ENCODE measurements at regions of chr3 and their contacts with region 1.

Region 1: GRCh38 chr3:111717601-111718000 is 122.5 kb upstream of the ZBED2 start:
- DNase-seq: no peak
- H3K4me3 ChIP-seq: no peak overlapping the region
- H3K27me3 ChIP-seq: no peaks in the 10 kb centered on the region
- CTCF ChIP-seq: peak; percentile 87

Region 2: GRCh38 chr3:111691293-111691909 is 26.2 kb before region 1 on chr3:
- CTCF ChIA-PET with region 1: interaction called, 29 read pairs
- POLR2A ChIA-PET with region 1: no interaction called
- DNase-seq: no peak
- H3K4me3 ChIP-seq: no peak overlapping the region
- H3K27me3 ChIP-seq: no peaks in the 10 kb centered on the region
- CTCF ChIP-seq: peak; percentile 64

Region 3: DNA sequence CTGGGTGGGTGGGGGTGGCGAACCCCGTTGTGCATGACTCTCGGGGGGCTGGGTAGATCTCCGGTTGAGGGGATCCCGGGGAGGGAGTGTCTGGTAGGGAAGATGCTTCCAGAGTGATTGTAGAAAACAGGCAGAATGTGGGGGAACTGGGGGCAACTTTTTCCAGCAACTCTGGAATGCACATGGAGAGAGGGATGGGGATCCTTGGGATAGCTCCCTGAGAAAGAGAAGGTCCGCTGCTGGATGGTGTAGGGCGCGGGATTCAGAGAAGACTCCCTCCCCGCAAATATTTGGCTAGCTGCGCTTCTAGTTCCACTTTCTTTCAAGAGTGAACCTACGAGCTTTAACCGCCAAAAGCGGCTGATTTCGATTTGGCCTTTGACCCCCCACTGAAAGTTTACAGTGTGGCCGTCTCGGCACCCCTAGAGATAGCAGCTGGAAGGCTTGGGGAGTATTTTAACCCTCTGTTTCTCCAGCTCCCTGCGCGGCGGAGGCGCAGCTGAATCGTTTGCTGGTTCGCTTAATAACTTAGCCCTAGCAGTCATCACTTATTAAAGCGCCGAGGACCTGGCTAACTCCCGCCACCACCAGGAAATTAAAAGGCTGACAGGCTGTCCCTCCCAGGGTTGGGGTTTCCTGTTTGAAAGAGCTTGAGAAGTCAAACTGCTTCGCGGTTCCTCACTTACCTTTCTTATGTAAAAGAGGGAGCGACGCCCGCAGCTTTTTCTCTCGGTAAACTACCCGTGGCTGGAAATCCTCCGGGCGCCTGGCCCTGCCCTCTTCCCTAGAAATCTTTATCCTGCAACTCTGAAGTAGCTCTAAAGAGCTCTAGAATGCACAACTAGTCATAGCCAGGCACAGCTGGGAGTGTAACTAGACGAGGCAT is 142.6 kb after region 1 on chr3:
- CTCF ChIA-PET with region 1: interaction called, 190 read pairs
- POLR2A ChIA-PET with region 1: interaction called, 3 read pairs
- DNase-seq: peak; percentile 64
- H3K4me3 ChIP-seq: peak overlapping the region; percentile 85
- H3K27me3 ChIP-seq: no peaks in the 10 kb centered on the region
- CTCF ChIP-seq: peak; percentile 66

Region 4: DNA sequence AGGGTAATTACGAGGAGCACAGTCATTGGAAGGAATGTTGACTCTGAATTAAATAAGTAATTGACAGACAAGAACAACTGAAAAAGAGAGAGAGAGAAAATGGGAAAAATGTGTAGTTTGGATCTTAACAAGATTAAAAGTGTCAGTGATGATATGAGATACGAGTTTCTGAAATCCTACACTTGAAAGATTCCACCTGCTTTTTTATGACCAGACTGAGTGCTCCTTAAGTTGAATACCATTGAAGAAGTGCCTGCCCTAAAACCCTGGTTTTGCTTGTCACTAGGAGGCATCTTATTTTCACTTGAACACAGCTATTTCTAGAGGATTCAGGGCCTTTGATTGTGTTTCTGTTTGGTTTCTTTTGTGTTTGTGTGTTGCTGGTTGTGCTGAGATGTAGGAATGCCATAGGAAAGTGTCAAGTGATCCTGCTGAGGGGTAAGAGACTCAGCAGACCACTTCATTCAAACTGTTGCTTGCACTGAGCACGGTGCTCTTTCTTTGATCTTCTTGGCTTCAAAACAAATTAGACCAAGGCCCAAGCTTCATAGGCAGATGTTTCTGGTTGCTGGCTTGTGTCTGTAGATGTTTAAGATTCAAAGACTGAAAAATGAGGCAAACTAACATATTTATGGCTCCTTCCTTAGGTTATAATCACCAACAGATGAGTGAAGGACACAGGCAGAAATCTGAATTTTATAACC is 244.0 kb after region 1 on chr3:
- CTCF ChIA-PET with region 1: interaction called, 157 read pairs
- POLR2A ChIA-PET with region 1: no interaction called
- DNase-seq: no peak
- H3K4me3 ChIP-seq: no peak overlapping the region
- H3K27me3 ChIP-seq: no peaks in the 10 kb centered on the region
- CTCF ChIP-seq: no peak

Region 5: DNA sequence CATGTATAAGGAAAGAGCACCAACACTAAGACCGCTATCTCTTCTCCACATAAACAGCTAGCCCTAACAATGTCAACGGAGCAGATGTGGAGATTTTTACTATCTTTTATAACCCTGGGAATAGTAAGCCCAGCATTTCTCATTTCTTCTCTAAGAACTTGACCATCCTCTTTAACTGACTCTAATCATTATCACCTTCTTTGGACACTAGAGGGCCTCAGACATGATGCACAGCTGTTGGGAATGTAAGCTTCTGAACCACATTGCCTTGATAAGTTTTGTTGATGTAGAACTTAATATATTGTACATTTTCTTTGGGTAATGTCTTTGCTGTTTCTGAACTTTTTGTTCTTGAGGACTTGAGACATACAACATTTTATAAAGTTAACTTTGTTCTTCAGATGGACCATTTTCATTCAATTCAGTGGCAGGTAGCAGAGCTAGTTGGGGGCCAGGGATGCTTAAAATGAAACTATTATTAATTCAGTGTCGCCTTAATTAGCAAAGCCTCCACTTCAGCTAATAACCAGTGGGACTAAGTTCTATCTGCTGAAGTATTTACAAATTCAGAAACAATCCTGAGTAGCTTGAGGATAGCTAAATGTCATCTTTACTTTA is 271.6 kb after region 1 on chr3:
- CTCF ChIA-PET with region 1: interaction called, 12 read pairs
- POLR2A ChIA-PET with region 1: no interaction called
- DNase-seq: peak; percentile 25
- H3K4me3 ChIP-seq: no peak overlapping the region
- H3K27me3 ChIP-seq: no peaks in the 10 kb centered on the region
- CTCF ChIP-seq: peak; percentile 79